WTC11 (cell line): ENCODE measurements at regions of chr6 and their contacts with region 1.

Region 1: DNA sequence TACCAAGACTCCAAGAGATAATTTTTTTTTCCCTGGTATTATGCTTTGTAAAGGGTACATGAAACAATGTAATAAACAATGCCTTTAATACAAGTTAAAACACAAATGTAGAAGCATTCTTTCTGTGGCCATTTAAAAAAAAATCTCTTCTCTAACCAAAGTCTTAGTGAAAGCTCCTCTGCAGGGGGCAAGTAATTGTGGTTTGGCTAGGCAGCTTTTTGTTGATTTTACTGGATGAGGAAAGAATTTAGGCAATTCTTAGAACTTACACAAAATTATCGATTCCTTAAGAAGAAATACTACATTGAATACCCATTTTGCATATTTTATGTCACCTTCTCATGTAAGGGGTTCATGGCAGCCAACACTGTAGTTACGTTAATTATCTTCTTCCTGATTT is 12.4 kb downstream of the TFB1M start:
- DNase-seq: no peak
- ATAC-seq: no peak
- H3K4me3 Mint-ChIP-seq: no peak overlapping the region
- H3K27ac Mint-ChIP-seq: no peak overlapping the region
- H3K4me1 Mint-ChIP-seq: peaks cover 19% of the 10 kb centered on the region
- H3K27me3 Mint-ChIP-seq: no peaks in the 10 kb centered on the region
- CTCF ChIP-seq: no peak

Region 2: GRCh38 chr6:154981079-154981870 is 320.6 kb before region 1 on chr6:
- CTCF ChIA-PET with region 1: no interaction called
- POLR2A ChIA-PET with region 1: interaction called, 10 read pairs
- DNase-seq: no peak
- ATAC-seq: no peak
- H3K4me3 Mint-ChIP-seq: no peak overlapping the region
- H3K27ac Mint-ChIP-seq: no peak overlapping the region
- H3K4me1 Mint-ChIP-seq: no peaks in the 10 kb centered on the region
- H3K27me3 Mint-ChIP-seq: no peaks in the 10 kb centered on the region
- CTCF ChIP-seq: no peak